ENCODE measurements at regions of chr1 and their contacts with region 1.

Region 1: GRCh38 chr1:6602669-6603237 is at the start of gene KLHL21:
- DNase-seq: peak; percentile 72 to 90 (median 81)
- ATAC-seq: peak; percentile 52 to 62
- H3K4me3 Mint-ChIP-seq: peak within 1 kb of the TSS; percentile 96 to 99 (median 99)
- H3K27ac Mint-ChIP-seq: peak within 1 kb of the TSS; percentile 95 to 99 (median 98)
- H3K4me1 Mint-ChIP-seq: peaks cover 13 to 43% (median 39%) of the 10 kb centered on the region in 4 donors
- H3K27me3 Mint-ChIP-seq: no peaks in the 10 kb centered on the region
- polyA plus RNA-seq, gene KLHL21: 15.7 to 26.4 (median 16.3) TPM

Region 2: DNA sequence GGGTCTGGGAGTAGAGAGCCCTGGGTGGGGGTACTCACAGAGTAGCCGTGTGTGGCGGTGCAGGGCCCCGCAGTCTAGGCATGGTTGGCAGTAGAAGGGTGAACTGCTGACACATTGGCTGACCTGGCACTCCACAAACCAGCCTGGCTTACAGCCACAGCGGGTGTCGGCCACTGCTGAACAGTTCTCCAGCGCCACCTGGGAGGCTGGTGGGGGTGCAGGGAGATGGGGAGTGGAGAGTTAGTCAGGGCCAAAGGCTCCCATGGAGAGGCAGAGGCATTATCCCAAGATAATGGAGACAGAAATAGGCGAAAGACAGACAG is 138.3 kb before region 1 on chr1:
- POLR2A ChIA-PET with region 1: interaction called, 10 read pairs
- DNase-seq: no peak
- ATAC-seq: no peak
- H3K4me3 Mint-ChIP-seq: peak overlapping the region; percentile 88 to 97 (median 91)
- H3K27ac Mint-ChIP-seq: peak overlapping the region; percentile 87 to 96 (median 92)
- H3K4me1 Mint-ChIP-seq: peaks cover 29 to 57% (median 48%) of the 10 kb centered on the region in 4 donors
- H3K27me3 Mint-ChIP-seq: peaks cover 0 to 4% (median 0%) of the 10 kb centered on the region in 5 donors

Region 3: DNA sequence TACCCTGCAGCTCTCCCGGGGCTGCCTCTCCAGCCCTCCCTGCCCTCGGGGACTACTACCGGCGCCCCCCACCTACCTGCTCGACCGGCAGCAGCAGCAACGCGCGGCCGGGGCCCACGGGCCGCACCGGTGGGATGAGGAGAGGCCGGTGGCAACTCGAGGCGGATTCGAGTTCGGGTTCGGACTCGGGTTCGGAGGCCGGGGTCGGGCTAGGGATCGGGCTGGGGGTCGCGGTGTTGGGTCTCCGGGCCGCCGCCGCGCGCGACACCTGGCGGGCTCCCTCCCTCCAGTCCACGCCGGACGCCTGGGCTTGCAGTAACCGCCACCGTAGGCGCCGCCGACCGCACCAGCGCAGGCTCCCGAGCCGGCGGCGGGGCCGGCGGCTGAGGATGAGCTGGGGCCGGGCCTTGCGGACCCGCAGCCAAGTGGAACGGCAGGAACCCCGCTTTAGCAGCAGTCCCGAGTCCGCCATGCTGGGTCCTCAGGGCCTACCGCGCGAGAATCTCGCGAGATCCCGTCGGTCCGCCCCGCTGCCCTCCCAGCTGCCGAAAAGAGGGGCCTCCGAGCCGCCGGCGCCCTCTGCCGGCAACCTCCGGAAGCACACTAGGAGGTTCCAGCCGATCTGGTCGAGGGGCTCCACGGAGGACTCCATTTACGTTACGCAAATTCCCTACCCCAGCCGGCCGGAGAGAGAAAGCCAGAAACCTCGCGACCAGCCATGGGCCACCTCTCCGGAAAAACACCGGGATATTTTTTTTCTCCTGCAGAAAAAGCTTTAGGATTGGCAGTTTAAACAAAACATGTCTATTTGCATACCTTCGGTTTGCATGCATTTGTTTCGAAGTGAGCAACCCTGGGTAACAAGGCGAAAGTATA is 48.5 kb before region 1 on chr1 and contains the start of gene NOL9:
- POLR2A ChIA-PET with region 1: interaction called, 65 read pairs
- DNase-seq: peak; percentile 91 to 96 (median 95)
- ATAC-seq: peak; percentile 98
- H3K4me3 Mint-ChIP-seq: peak within 1 kb of the TSS; percentile 71 to 87 (median 78)
- H3K27ac Mint-ChIP-seq: peak within 1 kb of the TSS; percentile 61 to 89 (median 82)
- H3K4me1 Mint-ChIP-seq: peaks cover 0 to 28% (median 17%) of the 10 kb centered on the region in 4 donors
- H3K27me3 Mint-ChIP-seq: no peaks in the 10 kb centered on the region
- polyA plus RNA-seq, gene NOL9: 10.4 to 19.4 (median 18.5) TPM

Region 4: GRCh38 chr1:6587261-6588005 is 15.3 kb before region 1 on chr1:
- POLR2A ChIA-PET with region 1: interaction called, 145 read pairs
- DNase-seq: no peak
- ATAC-seq: no peak
- H3K4me3 Mint-ChIP-seq: no peak overlapping the region
- H3K27ac Mint-ChIP-seq: peak overlapping the region in 8 of 10 donors; percentile 9 to 73 (median 60)
- H3K4me1 Mint-ChIP-seq: peaks cover 20 to 52% (median 37%) of the 10 kb centered on the region in 4 donors
- H3K27me3 Mint-ChIP-seq: no peaks in the 10 kb centered on the region

Region 5: DNA sequence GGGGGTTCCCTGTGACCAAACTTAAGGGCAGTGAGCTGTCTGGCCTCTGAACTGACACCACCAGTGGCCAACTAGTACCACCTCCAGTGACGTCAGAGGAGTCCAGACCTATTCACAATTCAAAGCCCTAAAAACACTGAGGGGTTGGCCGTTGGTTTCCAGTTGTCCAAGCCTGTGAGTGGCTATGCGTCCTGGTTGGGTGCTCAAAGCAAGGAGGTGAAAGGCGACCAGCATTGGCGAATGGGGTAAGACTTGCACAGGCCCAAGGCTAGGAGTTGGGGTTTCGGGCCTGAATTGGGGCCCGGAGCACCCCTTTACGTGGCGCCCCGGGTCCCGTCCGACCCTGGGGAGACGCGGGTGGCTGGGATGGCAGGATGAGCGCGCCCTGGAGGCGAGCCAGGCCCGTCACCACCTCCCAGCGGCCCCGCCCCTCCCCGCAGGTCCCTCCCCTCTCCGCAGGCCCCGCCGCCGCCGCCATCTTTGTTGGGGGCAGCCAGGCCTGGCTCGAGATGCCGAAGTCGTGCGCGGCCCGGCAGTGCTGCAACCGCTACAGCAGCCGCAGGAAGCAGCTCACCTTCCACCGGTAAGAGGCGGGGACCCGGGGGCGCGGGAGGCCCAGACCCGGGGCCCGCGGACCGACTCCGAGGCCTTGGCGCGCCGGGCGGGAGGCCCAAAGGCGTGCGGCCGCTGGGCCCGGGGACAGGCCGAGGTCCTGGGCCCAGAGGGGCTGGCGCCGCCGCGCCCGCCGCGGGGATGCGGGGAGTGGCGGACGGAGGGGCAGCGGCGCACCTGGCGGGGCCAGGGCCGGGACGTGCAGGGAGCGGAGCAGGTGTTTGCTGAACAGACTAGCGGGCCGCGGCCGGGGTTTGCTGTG is 22.2 kb after region 1 on chr1 and contains the start of gene THAP3:
- POLR2A ChIA-PET with region 1: interaction called, 91 read pairs
- DNase-seq: peak; percentile 82 to 94 (median 86)
- ATAC-seq: peak; percentile 95 to 96
- H3K4me3 Mint-ChIP-seq: peak within 1 kb of the TSS; percentile 82 to 92 (median 90)
- H3K27ac Mint-ChIP-seq: peak within 1 kb of the TSS; percentile 60 to 94 (median 89)
- H3K4me1 Mint-ChIP-seq: peaks cover 17 to 37% (median 34%) of the 10 kb centered on the region in 4 donors
- H3K27me3 Mint-ChIP-seq: no peaks in the 10 kb centered on the region
- polyA plus RNA-seq, gene THAP3: 20.1 to 26.5 (median 25.4) TPM